ENCODE measurements at regions of chr3 and their contacts with region 1.

Region 1: GRCh38 chr3:13125092-13126015 is 52.1 kb upstream of the IQSEC1 start:
- DNase-seq: no peak
- H3K4me3 ChIP-seq: no peak overlapping the region
- H3K27ac ChIP-seq: no peak overlapping the region
- H3K4me1 ChIP-seq: no peaks in the 10 kb centered on the region
- H3K27me3 ChIP-seq: no peaks in the 10 kb centered on the region
- CTCF ChIP-seq: no peak
- EP300 ChIP-seq: no peak
- POLR2A ChIP-seq: no peak

Region 2: DNA sequence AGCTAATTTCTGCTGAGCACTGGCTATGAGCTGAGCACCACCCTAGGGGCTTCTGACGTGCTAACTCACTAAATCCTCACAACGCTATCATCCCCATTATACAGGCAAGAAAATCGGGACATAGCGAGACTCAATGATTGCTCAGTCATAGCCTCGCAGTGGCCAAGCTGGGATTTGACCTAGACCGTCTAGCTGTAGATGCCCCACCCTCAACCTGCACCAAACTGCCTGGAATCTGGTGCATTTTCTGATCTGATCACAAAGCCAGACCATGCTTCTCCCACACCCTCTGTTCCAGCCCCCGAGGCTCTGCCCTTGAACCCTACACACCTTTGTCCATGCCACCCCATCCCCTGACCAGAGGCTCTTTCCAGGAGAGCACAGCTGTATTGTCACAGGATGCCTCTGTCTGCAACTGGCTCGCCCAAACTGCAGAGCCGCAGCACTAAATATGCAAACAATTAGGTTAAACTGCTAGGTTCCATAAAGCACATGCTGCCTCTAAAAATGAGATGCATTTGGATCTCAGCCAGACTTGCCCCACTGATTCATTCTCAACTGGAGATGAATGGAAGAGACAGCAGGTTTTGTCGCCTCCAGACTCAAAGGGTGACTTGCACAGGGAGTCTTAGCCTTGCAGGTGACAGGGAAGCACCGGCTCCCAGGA is 199.6 kb after region 1 on chr3:
- in situ Hi-C with region 1: no loop called
- intact Hi-C with region 1: loop called (anchors 1 kb)
- DNase-seq: peak; percentile 39
- H3K4me3 ChIP-seq: no peak overlapping the region
- H3K27ac ChIP-seq: no peak overlapping the region
- H3K4me1 ChIP-seq: peaks cover 0 to 4% (median 0%) of the 10 kb centered on the region in 4 donors
- H3K27me3 ChIP-seq: no peaks in the 10 kb centered on the region
- CTCF ChIP-seq: no peak
- EP300 ChIP-seq: no peak
- POLR2A ChIP-seq: no peak

Region 3: DNA sequence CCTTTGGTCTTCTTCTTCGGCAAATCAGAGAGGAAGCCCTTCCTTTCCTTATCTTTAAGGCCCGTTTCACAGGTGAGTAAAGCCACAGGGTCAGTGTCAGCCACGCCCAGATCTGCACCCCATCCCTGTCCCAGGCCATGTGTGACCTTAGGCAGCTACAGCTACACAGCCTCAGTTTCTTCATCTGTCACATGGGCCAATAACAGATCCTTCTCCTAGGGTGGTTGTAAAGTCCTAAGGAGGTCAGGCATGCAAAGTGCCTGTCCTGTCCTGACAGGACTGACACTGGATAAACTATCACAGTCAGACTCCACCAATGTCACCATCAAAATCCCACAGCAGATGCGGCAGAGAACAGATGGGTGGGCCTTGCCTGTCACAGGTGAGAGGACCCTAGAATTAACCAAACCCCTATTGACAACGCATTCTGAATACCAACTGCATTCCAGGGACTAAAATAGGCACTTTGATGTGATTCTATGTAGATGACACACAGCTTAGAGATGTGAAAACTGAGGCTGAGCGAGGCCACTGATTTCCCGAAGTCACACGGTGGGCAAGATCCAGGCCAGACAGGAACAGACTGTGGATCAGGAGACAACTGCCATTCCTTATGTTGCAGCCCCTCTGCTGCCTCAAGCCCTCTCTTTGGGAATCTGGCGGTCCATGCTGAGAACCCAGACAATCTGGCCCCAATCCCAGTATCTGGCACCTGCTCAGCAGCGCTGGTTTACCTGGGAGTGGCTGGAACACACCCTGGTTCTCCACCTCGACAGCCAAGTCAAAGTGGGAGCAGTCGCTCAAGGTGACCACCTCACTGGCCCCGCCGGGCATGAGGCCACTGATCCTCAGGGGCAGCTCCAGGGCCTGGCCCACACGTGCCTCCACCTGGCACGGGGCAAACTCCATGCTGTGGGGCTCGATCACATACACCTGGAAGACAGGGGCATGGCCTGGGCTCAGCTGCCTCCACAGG is 246.0 kb after region 1 on chr3:
- in situ Hi-C with region 1: no loop called
- intact Hi-C with region 1: no loop called
- DNase-seq: no peak
- H3K4me3 ChIP-seq: no peak overlapping the region
- H3K27ac ChIP-seq: no peak overlapping the region
- H3K4me1 ChIP-seq: no peaks in the 10 kb centered on the region
- H3K27me3 ChIP-seq: no peaks in the 10 kb centered on the region
- CTCF ChIP-seq: no peak
- EP300 ChIP-seq: no peak
- POLR2A ChIP-seq: no peak

Measured in transverse colon (tissue), 4 donors.